Right ventricle myocardium superior (tissue), 1 donor: ENCODE measurements at regions of chr1 and their contacts with region 1.

Region 1: GRCh38 chr1:172826096-172826743 is 167.3 kb downstream of the FASLG start:
- DNase-seq: no peak
- ATAC-seq: peak; percentile 89

Region 2: DNA sequence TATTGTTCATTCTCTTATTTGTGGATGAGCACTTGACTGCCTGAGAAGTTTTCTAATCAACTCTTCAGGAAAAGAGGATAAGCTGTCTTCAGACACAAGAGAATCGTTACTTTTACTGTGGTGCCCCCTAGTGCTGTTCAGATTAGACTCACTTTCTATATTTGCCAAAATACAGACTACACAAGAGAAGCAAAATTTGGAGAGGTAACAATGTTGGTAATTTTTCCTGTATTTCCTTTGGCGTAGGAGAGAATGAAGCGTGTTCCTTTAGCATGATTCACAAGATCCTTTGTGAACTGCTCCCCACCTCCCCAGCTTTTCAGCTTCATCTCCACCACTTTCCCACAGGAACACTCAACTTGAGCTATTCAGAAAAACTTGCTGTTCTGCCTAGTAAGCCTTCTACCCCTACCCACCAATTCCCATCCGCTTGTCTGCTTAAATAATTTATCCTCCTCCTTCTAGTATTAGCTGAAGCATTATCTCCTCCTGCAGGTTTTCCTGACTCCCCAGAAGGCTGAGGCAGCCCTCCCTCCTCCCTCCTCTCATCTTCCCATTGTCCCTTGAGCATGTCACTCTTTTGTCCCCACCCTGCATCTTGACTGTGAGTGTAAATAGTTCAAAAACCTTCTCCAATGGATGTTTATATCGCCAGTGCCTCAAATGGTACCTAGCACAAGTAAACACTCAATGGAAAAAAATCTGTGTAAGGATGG is 376.4 kb after region 1 on chr1:
- intact Hi-C with region 1: loop called (anchors 5 kb)
- DNase-seq: no peak
- ATAC-seq: peak; percentile 74